AG04449 (cell line): ENCODE measurements at regions of chr16 and their contacts with region 1.

Region 1: DNA sequence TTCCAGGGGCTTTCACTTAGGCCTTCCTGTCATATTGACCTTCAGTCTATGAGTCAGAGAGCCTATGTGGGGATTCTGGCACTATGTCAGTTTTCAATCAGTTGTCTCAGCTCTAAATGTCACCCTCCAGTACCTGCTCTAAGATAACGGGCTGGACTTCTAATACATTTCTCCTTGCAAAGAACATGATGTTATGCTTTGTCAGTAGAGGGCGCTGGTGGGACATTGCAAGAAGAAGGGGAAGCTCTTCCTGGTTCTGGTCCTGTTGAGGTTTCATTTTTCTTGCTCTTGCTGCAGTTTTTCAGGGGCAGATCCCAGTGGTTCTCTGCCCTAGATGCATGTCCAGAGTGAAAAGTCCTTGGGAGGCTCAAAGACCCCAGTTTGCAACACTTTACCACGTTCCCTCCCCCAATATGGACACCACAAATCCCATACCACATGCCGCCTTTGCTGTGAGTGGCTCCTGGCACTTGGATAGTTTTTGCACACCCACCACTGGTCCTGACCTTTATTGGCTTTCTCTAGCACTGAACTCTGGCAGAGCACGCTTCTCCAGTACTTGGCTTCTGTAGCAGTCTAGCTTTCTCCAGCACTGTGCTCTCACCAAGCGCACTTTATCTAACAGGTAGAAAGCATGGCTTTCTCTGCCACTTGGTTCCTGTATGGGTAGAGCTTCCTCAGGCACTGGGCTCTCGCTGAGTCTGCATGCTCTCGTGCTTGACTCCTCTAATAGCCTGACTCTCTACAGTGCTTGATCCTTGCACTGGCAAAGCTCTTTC is 49.0 kb downstream of the BCL7C start:
- DNase-seq: peak; percentile 53
- H3K4me3 ChIP-seq: peak overlapping the region; percentile 18; the same call in 1 of the 2 replicates
- CTCF ChIP-seq: peak; percentile 83

Region 2: DNA sequence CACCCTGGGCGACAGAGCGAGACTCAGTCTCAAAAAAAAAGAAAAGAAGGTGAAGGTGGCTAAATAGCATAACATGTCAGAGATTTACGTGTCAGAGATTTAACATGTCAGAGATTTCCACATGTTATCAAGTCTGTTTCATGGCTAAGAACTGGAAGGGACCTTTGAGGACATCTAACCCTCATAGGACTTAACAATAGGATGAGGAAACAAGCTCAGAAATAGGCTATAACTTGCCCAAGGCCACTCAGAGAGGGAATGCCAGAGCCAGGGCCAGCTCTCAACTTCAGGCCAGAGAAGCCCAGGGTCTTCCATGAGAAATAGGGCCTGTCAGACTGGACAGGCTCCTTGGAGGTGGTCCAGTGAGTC is 31.1 kb before region 1 on chr16:
- CTCF ChIA-PET with region 1: interaction called, 28 read pairs
- POLR2A ChIA-PET with region 1: no interaction called
- DNase-seq: no peak
- H3K4me3 ChIP-seq: peak overlapping the region; percentile 43
- CTCF ChIP-seq: no peak

Region 3: DNA sequence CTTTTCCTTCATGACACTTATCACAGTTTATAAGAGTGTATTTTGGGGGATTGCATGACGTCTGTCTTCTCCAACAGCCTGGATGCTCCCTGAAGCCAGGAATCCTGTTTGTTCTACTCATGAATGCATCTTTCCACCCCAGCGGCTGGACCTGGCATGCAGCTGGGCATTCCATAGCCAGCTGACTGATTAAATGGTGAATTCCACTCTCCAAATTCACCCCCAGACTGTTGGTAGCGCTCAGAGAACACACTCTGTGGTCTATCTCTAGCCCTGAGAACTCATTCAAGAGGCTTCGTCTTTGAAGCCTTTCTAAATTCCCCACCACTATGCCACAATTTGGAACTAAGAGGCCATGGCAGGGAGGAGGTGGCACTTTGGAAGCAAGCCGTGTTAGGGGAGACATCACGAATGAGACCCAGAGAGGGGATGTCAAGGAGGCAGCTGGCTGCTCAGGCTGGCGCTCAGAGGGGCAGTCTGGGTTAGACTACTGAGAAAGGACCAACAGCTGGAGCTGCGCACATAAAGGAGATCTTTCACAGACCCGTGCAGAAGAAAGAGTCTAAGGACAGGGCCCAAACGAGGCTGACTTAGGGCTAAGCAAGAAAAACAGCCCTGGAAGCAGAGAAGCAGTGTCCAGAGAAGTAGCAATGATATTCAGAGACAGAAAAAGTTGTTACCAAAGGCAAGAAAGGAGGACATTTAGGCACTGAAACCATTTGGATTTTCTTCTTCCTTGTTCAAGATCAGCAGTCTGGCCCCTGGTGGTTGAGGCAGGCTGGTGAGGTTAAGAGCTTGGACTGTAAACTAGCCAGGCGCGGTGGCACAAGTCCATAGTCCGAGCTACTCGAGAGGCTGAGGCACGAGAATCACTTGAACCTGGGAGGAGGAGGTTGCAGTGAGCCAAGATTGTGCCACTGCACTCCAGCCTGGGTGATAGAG is 15.5 kb before region 1 on chr16:
- CTCF ChIA-PET with region 1: interaction called, 42 read pairs
- POLR2A ChIA-PET with region 1: interaction called, 3 read pairs
- DNase-seq: no peak
- H3K4me3 ChIP-seq: no peak overlapping the region
- CTCF ChIP-seq: no peak

Region 4: GRCh38 chr16:30893744-30894539 is 49.1 kb after region 1 on chr16 and contains the start of gene BCL7C:
- CTCF ChIA-PET with region 1: interaction called, 116 read pairs
- POLR2A ChIA-PET with region 1: no interaction called
- DNase-seq: no peak
- H3K4me3 ChIP-seq: peak within 1 kb of the TSS; percentile 82
- CTCF ChIP-seq: peak; percentile 61

Region 5: GRCh38 chr16:30941600-30942425 is 97.0 kb after region 1 on chr16:
- CTCF ChIA-PET with region 1: interaction called, 61 read pairs
- POLR2A ChIA-PET with region 1: no interaction called
- DNase-seq: no peak
- H3K4me3 ChIP-seq: no peak overlapping the region
- CTCF ChIP-seq: peak; percentile 88

Region 6: GRCh38 chr16:31138621-31139578 is 294.0 kb after region 1 on chr16:
- CTCF ChIA-PET with region 1: no interaction called
- POLR2A ChIA-PET with region 1: no interaction called
- DNase-seq: no peak
- H3K4me3 ChIP-seq: no peak overlapping the region
- CTCF ChIP-seq: no peak